A549 (cell line): ENCODE measurements at regions of chr4 and their contacts with region 1.

Region 1: GRCh38 chr4:20684852-20685763 is 15.2 kb upstream of the PACRGL start:
- DNase-seq: peak; percentile 1
- ATAC-seq: no peak
- H3K4me3 ChIP-seq: no peak overlapping the region
- H3K27ac ChIP-seq: no peak overlapping the region
- H3K4me1 ChIP-seq: no peaks in the 10 kb centered on the region
- CTCF ChIP-seq: peak; percentile 53
- EP300 ChIP-seq: no peak
- POLR2A ChIP-seq: no peak
- RAD21 ChIP-seq: peak; percentile 58 to 61

Region 2: GRCh38 chr4:20421603-20421985 is 263.5 kb before region 1 on chr4:
- CTCF ChIA-PET with region 1: interaction called, 10 read pairs
- POLR2A ChIA-PET with region 1: no interaction called
- DNase-seq: no peak
- ATAC-seq: no peak
- H3K4me3 ChIP-seq: no peak overlapping the region
- H3K27ac ChIP-seq: no peak overlapping the region
- H3K4me1 ChIP-seq: no peaks in the 10 kb centered on the region
- CTCF ChIP-seq: no peak
- EP300 ChIP-seq: no peak
- POLR2A ChIP-seq: no peak
- RAD21 ChIP-seq: no peak

Region 3: GRCh38 chr4:20696815-20697214 is 11.7 kb after region 1 on chr4:
- CTCF ChIA-PET with region 1: interaction called, 11 read pairs
- POLR2A ChIA-PET with region 1: no interaction called
- DNase-seq: no peak
- ATAC-seq: no peak
- H3K4me3 ChIP-seq: no peak overlapping the region
- H3K27ac ChIP-seq: no peak overlapping the region
- H3K4me1 ChIP-seq: peaks cover 9% of the 10 kb centered on the region; the same call in 1 of the 3 replicates
- CTCF ChIP-seq: no peak
- EP300 ChIP-seq: no peak
- POLR2A ChIP-seq: no peak
- RAD21 ChIP-seq: no peak